ENCODE measurements at regions of chr12 and their contacts with region 1.

Region 1: GRCh38 chr12:82326905-82327503 is 31.2 kb downstream of the CCDC59 start:
- DNase-seq: no peak
- H3K4me3 Mint-ChIP-seq: no peak overlapping the region
- H3K27ac Mint-ChIP-seq: no peak overlapping the region
- H3K4me1 Mint-ChIP-seq: no peaks in the 10 kb centered on the region
- H3K27me3 Mint-ChIP-seq: no peaks in the 10 kb centered on the region
- CTCF ChIP-seq: peak; percentile 40

Region 2: GRCh38 chr12:81797100-81797499 is 529.9 kb before region 1 on chr12:
- CTCF ChIA-PET with region 1: no interaction called
- intact Hi-C with region 1: loop called (anchors 10 kb)
- DNase-seq: no peak
- H3K4me3 Mint-ChIP-seq: no peak overlapping the region
- H3K27ac Mint-ChIP-seq: no peak overlapping the region
- H3K4me1 Mint-ChIP-seq: peaks cover 8% of the 10 kb centered on the region
- H3K27me3 Mint-ChIP-seq: no peaks in the 10 kb centered on the region
- CTCF ChIP-seq: peak; percentile 46

Region 3: DNA sequence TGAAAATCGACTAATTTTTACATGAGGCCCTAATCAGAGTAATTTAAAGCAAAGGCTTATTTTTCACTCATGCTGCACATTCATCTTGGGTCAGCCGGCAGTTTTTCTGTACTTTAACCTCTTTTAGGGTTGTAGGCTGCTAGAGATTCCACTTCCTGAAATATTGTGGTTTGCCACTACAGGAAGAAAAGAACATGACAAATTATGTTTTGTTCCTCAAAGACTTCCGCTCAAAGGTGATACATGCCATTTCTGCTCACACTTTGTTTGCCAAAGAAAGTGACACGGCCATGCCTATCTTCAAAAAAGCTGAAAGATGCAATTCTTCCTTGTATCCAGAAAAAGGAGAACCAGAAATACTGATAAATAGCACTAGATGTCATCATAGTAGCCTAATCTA is 384.4 kb before region 1 on chr12:
- CTCF ChIA-PET with region 1: no interaction called
- intact Hi-C with region 1: loop called (anchors 2 kb)
- DNase-seq: peak; percentile 14
- H3K4me3 Mint-ChIP-seq: no peak overlapping the region
- H3K27ac Mint-ChIP-seq: peak overlapping the region; percentile 65
- H3K4me1 Mint-ChIP-seq: peaks cover 19% of the 10 kb centered on the region
- H3K27me3 Mint-ChIP-seq: no peaks in the 10 kb centered on the region
- CTCF ChIP-seq: no peak

Measured in Calu3 (cell line).